BJ (cell line): ENCODE measurements at regions of chr3 and their contacts with region 1.

Region 1: DNA sequence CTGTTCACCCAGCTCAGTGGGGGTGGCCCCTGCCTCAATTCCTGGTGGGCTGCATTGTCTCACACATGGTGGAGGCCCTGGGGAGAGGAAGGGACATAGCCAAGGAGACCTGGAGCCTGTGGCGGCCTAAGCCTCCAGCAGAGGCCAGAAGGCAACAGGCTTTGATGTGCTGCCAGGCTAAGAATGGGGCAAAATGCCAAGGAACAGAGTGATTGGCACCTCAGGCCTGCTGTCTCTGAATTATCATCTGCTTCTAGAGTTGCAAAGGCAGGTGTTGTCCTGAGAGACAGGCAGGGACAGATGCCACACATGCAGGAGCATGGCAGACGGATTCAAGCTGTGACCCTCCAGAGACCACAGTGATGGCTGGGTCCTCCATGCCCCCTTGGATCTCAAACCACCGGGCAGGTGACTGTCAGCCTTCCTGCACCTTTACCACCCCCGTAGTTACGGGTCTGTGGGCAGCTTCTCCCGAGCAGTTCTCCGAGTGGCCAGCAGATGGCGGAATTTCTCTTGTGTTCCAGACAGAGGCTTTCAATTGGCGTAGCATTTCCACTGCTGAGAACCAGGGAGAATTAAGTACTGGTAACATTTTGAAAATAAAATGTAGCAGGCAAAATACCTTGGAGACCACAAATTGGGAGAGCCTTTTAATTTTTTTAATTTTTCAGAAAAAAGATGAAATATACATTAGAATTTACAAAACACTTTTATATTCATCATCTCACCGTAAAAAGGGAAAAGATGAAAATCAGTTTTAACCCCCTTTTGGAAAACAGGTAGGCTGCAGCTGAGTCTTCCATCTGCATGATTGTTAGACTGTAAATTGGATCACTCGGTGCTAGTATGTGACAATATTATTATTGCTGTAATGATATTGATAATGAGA is 525.5 kb upstream of the CFAP20DC start:
- DNase-seq: no peak
- H3K4me3 ChIP-seq: no peak overlapping the region
- H3K27me3 ChIP-seq: no peaks in the 10 kb centered on the region
- CTCF ChIP-seq: peak; percentile 90

Region 2: GRCh38 chr3:59286791-59287531 is 288.4 kb before region 1 on chr3:
- CTCF ChIA-PET with region 1: no interaction called
- POLR2A ChIA-PET with region 1: no interaction called
- DNase-seq: no peak
- H3K4me3 ChIP-seq: no peak overlapping the region
- H3K27me3 ChIP-seq: no peaks in the 10 kb centered on the region
- CTCF ChIP-seq: no peak

Region 3: GRCh38 chr3:59526999-59527398 is 48.4 kb before region 1 on chr3:
- CTCF ChIA-PET with region 1: no interaction called
- POLR2A ChIA-PET with region 1: interaction called, 15 read pairs
- DNase-seq: no peak
- H3K4me3 ChIP-seq: no peak overlapping the region
- H3K27me3 ChIP-seq: no peaks in the 10 kb centered on the region
- CTCF ChIP-seq: no peak

Region 4: DNA sequence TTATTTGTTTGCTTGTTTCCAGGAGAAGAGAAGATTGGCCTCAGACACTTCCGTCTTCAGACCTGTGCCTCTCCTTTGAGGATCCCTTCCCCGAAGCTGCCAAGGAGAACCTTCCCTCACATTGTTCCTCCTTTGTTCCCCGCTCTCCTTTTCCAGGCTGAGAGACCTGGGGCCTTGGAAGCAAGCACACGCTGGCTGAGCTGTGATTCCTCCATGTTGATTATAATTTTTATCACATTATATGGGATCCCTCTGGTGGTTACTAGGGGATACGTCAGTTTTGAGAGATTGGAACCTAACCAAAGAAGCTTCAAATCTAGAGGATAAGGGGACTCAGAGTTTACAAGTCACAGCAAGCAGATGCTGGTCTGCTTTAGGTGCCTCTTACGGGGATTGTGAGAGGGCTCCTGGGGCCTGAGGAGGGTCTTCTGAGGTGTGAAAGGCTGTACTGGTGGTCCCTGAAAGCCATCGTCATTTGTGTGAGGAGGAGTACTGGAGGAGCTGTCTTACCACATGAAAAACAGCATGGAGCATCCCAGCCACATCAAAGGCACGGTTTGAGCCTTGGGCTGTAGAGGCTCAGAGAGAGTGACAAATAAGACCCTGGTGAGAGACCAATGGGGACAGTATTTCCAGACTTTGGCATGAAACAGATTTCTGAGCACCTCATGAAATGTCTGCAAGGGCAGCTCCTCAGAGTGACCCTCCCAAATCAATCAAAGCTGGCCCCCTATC is 234.5 kb after region 1 on chr3:
- CTCF ChIA-PET with region 1: interaction called, 21 read pairs
- POLR2A ChIA-PET with region 1: no interaction called
- DNase-seq: no peak
- H3K4me3 ChIP-seq: no peak overlapping the region
- H3K27me3 ChIP-seq: no peaks in the 10 kb centered on the region
- CTCF ChIP-seq: peak; percentile 42